Heart right ventricle (tissue), 16 donors: ENCODE measurements at regions of chr9 and their contacts with region 1.

Region 1: DNA sequence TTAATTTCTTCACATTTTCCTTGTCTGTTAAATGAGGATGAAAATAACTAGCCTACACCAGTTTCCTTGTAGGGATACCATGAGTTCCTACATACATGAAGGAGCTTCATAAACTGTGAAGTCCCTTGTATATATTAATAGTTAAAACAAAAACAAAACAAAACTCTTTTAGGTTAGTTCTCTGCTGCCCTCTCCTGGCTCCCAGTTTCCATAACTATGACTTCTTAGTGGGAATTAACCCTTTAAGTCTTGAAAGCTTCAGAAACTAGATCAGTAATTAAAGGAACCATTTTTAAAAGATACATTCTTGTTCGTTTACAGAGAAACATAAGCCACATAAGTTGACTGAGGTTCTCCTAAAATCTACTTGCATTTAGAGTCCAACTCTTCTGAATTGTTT is 500.0 kb upstream of the C9orf72 start:
- DNase-seq: peak in 1 of 2 donors; percentile 14
- ATAC-seq: no peak
- H3K4me3 ChIP-seq: no peak overlapping the region
- H3K27ac ChIP-seq: no peak overlapping the region
- H3K4me1 ChIP-seq: no peaks in the 10 kb centered on the region
- H3K27me3 ChIP-seq: no peaks in the 10 kb centered on the region
- CTCF ChIP-seq: peak in 8 of 9 donors; percentile 15 to 64 (median 48)

Region 2: DNA sequence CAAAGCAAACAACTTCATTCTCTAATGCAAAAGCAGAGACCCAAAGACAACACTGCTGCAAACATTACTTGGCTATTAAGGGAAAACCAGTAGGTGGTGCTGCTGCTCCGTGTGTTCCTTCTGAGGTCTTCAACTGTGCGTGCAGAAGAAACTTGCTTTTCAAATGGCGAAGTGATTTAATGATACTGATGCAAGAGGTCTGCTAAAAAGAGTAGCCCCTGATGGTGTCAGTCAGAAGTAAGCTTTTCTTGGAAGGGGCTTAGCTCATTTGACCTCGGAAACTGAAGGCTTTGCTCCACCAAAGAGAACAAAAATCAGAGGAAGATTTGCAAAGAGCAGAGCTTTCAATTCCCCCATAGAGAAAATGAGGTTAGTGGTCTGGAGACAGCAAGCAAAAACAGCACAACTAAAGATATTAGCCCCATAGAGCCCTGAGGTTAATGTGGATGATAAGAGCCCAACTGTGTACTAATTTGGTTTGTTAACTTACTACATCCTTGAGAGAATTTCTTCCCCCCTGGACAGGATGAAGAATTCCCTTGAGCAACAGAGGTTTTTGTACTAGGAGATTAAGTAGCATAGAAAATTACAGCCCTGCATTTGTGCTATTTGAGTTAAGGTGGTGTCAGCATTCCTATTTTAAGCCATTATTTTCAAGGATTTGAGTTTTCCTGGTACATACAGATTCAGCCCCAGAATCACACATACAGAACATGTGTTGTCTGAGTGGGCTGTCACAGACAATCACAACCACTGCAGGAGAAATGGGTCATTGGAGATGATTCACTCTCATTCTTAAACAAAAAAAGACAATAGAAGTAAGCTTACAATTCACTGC is 346.8 kb before region 1 on chr9:
- intact Hi-C with region 1: loop called in 7 of 10 experiments (anchors 2 to 5 kb)
- DNase-seq: peak; percentile 24 to 63
- ATAC-seq: peak in 6 of 8 donors; percentile 61 to 75 (median 69)
- H3K4me3 ChIP-seq: no peak overlapping the region
- H3K27ac ChIP-seq: no peak overlapping the region
- H3K4me1 ChIP-seq: peaks cover 0 to 5% (median 0%) of the 10 kb centered on the region in 9 donors
- H3K27me3 ChIP-seq: peaks cover 0 to 10% (median 0%) of the 10 kb centered on the region in 7 donors
- CTCF ChIP-seq: peak; percentile 37 to 86 (median 72)

Region 3: DNA sequence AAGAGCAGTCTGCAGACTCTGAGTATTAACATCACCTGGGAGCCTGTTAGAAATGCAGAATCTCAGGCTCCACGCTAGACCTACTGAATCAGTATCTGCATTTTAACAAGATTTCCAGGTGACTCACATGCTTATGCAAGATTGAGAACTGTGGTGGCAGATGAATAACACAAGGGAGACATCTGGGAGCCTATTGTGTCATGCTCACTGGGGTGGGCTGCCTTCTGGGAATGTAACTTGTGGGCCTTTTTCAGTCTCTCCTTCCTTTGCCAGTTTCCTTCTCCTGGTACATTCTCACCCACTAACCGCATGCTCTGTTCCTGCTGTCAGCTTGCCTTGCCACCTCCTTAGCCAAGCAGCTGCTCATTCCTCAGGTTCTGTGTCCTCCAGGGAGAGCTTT is 323.4 kb before region 1 on chr9:
- intact Hi-C with region 1: loop called in 1 of 10 experiments (anchors 10 kb)
- DNase-seq: no peak
- ATAC-seq: no peak
- H3K4me3 ChIP-seq: no peak overlapping the region
- H3K27ac ChIP-seq: no peak overlapping the region
- H3K4me1 ChIP-seq: no peaks in the 10 kb centered on the region
- H3K27me3 ChIP-seq: peaks cover 0 to 7% (median 0%) of the 10 kb centered on the region in 7 donors
- CTCF ChIP-seq: no peak

Region 4: GRCh38 chr9:28024676-28025075 is 48.6 kb before region 1 on chr9:
- intact Hi-C with region 1: loop called in 1 of 10 experiments (anchors 5 kb)
- DNase-seq: no peak
- ATAC-seq: no peak
- H3K4me3 ChIP-seq: no peak overlapping the region
- H3K27ac ChIP-seq: no peak overlapping the region
- H3K4me1 ChIP-seq: no peaks in the 10 kb centered on the region
- H3K27me3 ChIP-seq: no peaks in the 10 kb centered on the region
- CTCF ChIP-seq: no peak

Region 5: GRCh38 chr9:28120184-28120583 is 46.9 kb after region 1 on chr9:
- intact Hi-C with region 1: loop called in 1 of 10 experiments (anchors 10 kb)
- DNase-seq: no peak
- ATAC-seq: no peak
- H3K4me3 ChIP-seq: no peak overlapping the region
- H3K27ac ChIP-seq: no peak overlapping the region
- H3K4me1 ChIP-seq: no peaks in the 10 kb centered on the region
- H3K27me3 ChIP-seq: no peaks in the 10 kb centered on the region
- CTCF ChIP-seq: no peak

Region 6: DNA sequence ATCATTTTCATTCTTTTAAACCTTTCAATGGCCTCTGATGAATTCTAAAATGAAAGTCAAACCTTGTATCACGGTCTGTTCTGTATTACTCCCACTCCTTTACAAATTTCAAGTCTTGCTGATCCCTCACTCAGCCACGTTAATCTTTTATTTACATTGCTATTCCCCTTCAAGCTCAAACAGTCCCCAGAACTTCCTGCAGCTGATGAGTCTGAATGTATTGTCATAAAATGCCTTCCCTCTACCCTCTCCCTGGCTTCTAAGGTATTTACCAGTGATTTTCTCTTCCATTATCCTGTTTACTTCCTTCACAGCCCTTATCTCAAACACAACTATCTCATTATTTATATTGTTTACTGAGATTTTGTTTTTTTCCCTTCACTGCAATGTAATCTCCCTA is 62.3 kb after region 1 on chr9:
- intact Hi-C with region 1: no loop called
- DNase-seq: no peak
- ATAC-seq: no peak
- H3K4me3 ChIP-seq: no peak overlapping the region
- H3K27ac ChIP-seq: no peak overlapping the region
- H3K4me1 ChIP-seq: no peaks in the 10 kb centered on the region
- H3K27me3 ChIP-seq: no peaks in the 10 kb centered on the region
- CTCF ChIP-seq: no peak

Region 7: GRCh38 chr9:28190981-28191380 is 117.7 kb after region 1 on chr9:
- intact Hi-C with region 1: no loop called
- DNase-seq: no peak
- ATAC-seq: no peak
- H3K4me3 ChIP-seq: no peak overlapping the region
- H3K27ac ChIP-seq: no peak overlapping the region
- H3K4me1 ChIP-seq: no peaks in the 10 kb centered on the region
- H3K27me3 ChIP-seq: no peaks in the 10 kb centered on the region
- CTCF ChIP-seq: no peak